ENCODE measurements at regions of chr14 and their contacts with region 1.

Region 1: DNA sequence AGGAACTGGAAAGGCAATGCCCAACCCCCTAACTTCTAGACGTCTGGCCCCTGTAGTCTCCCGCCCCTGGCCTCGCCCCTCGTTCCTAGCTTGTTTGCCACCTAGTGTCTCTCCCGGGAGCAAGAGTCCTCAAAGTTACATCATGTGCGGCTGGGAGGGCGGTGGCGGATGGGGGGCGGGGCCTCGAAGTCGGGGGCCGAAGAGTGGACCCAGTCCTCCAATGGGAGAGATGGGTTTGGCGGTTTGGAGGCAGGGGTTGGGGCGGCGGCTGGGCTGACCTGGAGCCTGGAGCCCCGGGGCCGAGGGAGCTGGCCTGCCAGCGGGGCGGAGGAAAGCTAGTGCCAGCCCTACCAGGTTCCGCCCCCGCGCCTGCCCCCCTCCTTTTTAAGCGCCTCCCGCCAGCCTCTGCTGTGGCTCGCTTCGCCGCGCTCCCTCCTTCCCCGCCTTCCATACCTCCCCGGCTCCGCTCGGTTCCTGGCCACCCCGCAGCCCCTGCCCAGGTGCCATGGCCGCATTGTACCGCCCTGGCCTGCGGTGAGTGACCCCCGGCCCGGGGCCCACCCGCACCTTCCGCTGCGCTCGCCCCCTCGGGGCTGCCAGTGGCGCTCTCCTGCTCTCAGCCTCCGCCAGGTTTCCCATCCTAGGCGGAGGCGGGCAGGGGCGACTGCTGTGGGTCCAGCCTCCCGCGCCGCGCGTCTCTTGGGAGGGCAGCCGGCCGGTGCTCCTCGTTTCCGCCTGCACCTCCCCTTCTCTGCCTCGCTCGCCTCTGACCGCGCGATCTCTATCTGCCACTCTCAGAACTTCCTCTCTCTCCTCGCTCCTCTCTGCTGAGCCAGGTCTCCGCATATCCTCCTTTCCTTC is at the start of gene PCK2:
- DNase-seq: peak; percentile 79 to 85 (median 81)
- H3K4me3 ChIP-seq: peak within 1 kb of the TSS; percentile 64 to 98 (median 72)
- H3K4me3 Mint-ChIP-seq: peak within 1 kb of the TSS; percentile 96 to 97
- H3K27ac ChIP-seq: peak within 1 kb of the TSS; percentile 68 to 92
- H3K27ac Mint-ChIP-seq: peak within 1 kb of the TSS; percentile 89 to 95 (median 93)
- H3K4me1 ChIP-seq: peaks cover 43 to 57% of the 10 kb centered on the region in 2 donors
- H3K4me1 Mint-ChIP-seq: peaks cover 50% of the 10 kb centered on the region
- H3K27me3 ChIP-seq: no peaks in the 10 kb centered on the region
- H3K27me3 Mint-ChIP-seq: peaks cover 0 to 2% (median 1%) of the 10 kb centered on the region in 3 donors
- CTCF ChIP-seq: no peak
- polyA plus RNA-seq, gene PCK2: 29.9 to 34.2 (median 31.3) TPM

Region 2: GRCh38 chr14:24013654-24014514 is 80.2 kb before region 1 on chr14:
- intact Hi-C with region 1: loop called in 1 of 2 experiments (anchors 2 kb)
- DNase-seq: peak; percentile 61 to 79 (median 71)
- H3K4me3 ChIP-seq: no peak overlapping the region
- H3K4me3 Mint-ChIP-seq: no peak overlapping the region
- H3K27ac ChIP-seq: no peak overlapping the region
- H3K27ac Mint-ChIP-seq: no peak overlapping the region
- H3K4me1 ChIP-seq: peaks cover 7 to 18% of the 10 kb centered on the region in 2 donors
- H3K4me1 Mint-ChIP-seq: peaks cover 36% of the 10 kb centered on the region
- H3K27me3 ChIP-seq: no peaks in the 10 kb centered on the region
- H3K27me3 Mint-ChIP-seq: peaks cover 0 to 4% (median 3%) of the 10 kb centered on the region in 3 donors
- CTCF ChIP-seq: peak; percentile 90

Region 3: GRCh38 chr14:24058260-24058950 is 35.7 kb before region 1 on chr14:
- intact Hi-C with region 1: loop called in 1 of 2 experiments (anchors 2 kb)
- DNase-seq: peak in 2 of 3 donors; percentile 42 to 75
- H3K4me3 ChIP-seq: no peak overlapping the region
- H3K4me3 Mint-ChIP-seq: no peak overlapping the region
- H3K27ac ChIP-seq: no peak overlapping the region
- H3K27ac Mint-ChIP-seq: peak overlapping the region in 3 of 7 donors; percentile 52 to 57 (median 55)
- H3K4me1 ChIP-seq: no peaks in the 10 kb centered on the region
- H3K4me1 Mint-ChIP-seq: peaks cover 3% of the 10 kb centered on the region
- H3K27me3 ChIP-seq: peaks cover 0 to 7% of the 10 kb centered on the region in 2 donors
- H3K27me3 Mint-ChIP-seq: peaks cover 9 to 18% (median 15%) of the 10 kb centered on the region in 3 donors
- CTCF ChIP-seq: peak; percentile 92

Measured in CD14-positive monocyte (primary cell).